ENCODE measurements at regions of chr14 and their contacts with region 1.

Region 1: GRCh38 chr14:24108336-24108874 is 6.2 kb upstream of the DCAF11 start:
- DNase-seq: no peak
- ATAC-seq: no peak
- H3K4me3 Mint-ChIP-seq: peak overlapping the region; percentile 7
- H3K27ac Mint-ChIP-seq: peak overlapping the region; percentile 94
- H3K4me1 Mint-ChIP-seq: peaks cover 24% of the 10 kb centered on the region
- H3K27me3 Mint-ChIP-seq: no peaks in the 10 kb centered on the region

Region 2: DNA sequence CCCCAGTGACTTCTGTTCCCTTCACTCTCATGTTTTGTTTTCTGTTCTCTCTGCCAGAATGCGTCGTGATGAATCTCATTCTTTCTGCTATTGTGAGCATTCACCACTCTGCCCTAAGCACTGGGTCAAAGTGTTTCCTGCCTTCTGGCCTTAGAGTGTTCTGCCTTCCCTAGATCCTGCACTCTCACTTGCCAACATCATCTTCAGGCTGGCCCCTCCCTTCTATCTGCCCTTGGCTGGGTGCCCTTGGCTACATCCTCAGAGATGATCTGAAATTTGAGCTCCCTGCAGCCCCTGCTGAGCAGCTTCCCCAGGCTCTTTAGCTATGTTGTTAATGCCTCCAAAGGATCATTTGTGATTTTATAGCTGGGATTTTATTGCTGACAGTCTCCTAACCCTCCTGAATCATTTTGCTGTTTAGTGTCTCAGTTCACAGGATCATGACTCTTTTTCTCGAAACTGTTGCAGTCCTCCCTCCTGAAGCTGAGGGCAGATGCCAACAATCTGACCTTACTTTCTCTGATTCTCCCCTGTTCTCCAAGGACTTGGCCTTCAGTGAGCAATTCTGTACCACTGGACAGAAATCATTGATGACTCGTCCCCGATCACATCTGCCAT is 467.8 kb before region 1 on chr14:
- CTCF ChIA-PET with region 1: no interaction called
- POLR2A ChIA-PET with region 1: no interaction called
- intact Hi-C with region 1: no loop called
- DNase-seq: no peak
- ATAC-seq: no peak
- H3K4me3 Mint-ChIP-seq: no peak overlapping the region
- H3K27ac Mint-ChIP-seq: no peak overlapping the region
- H3K4me1 Mint-ChIP-seq: no peaks in the 10 kb centered on the region
- H3K27me3 Mint-ChIP-seq: no peaks in the 10 kb centered on the region

Region 3: GRCh38 chr14:23827100-23827892 is 281.1 kb before region 1 on chr14:
- CTCF ChIA-PET with region 1: no interaction called
- POLR2A ChIA-PET with region 1: no interaction called
- intact Hi-C with region 1: no loop called
- DNase-seq: no peak
- ATAC-seq: no peak
- H3K4me3 Mint-ChIP-seq: no peak overlapping the region
- H3K27ac Mint-ChIP-seq: no peak overlapping the region
- H3K4me1 Mint-ChIP-seq: peaks cover 2% of the 10 kb centered on the region
- H3K27me3 Mint-ChIP-seq: peaks cover 3% of the 10 kb centered on the region

Region 4: GRCh38 chr14:24058260-24058950 is 50.0 kb before region 1 on chr14:
- CTCF ChIA-PET with region 1: interaction called, 71 read pairs
- POLR2A ChIA-PET with region 1: interaction called, 4 read pairs
- intact Hi-C with region 1: loop called (anchors 1 to 2 kb)
- DNase-seq: peak; percentile 73
- ATAC-seq: peak; percentile 63
- H3K4me3 Mint-ChIP-seq: no peak overlapping the region
- H3K27ac Mint-ChIP-seq: peak overlapping the region; percentile 40
- H3K4me1 Mint-ChIP-seq: peaks cover 4% of the 10 kb centered on the region
- H3K27me3 Mint-ChIP-seq: peaks cover 2% of the 10 kb centered on the region

Region 5: DNA sequence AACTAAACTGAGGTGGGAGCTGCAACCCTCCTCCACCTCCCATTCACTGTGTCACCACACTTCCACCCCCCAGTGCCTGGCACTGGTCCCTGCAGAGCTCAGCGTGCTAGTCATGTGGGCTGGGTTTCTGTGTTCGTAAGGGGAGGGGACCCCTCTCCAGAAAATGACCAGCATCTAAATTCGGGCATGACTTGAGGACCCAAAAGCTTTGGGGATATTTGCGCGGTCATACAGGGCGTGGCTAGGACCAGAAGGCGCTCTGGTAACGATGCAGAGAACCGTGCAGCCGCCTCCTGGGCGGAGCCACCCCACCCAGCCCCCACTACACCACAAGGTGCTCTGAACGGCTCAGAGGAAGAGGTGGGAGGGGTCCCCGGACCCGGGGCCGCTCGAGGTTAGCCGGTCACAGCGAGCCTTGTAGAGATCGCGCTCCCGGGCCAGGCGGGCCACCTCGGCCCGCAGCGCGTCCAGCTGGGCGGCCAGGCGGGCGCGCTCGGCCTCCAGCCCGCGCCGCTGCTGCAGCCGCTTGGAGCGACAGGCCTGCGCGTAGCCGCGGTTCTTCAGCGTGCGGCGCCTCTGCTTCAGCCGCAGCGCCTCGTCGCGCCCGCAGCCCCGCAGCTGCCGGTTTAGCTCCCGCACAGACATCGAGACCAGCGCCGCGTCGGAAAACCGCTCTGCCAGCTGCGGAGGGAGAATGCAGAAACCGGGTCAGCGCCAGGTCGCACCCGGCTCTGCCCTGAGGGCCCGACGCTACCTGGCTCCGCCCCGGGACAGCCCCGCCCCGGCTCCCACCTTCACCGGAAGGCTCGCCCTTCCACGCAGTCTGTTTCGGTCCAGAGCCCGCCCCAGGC is 27.3 kb before region 1 on chr14:
- CTCF ChIA-PET with region 1: interaction called, 14 read pairs
- POLR2A ChIA-PET with region 1: interaction called, 6 read pairs
- intact Hi-C with region 1: no loop called
- DNase-seq: peak; percentile 84
- ATAC-seq: peak; percentile 92
- H3K4me3 Mint-ChIP-seq: peak overlapping the region; percentile 68
- H3K27ac Mint-ChIP-seq: peak overlapping the region; percentile 45
- H3K4me1 Mint-ChIP-seq: peaks cover 20% of the 10 kb centered on the region
- H3K27me3 Mint-ChIP-seq: no peaks in the 10 kb centered on the region

Region 6: GRCh38 chr14:24135834-24136542 is 27.6 kb after region 1 on chr14 and contains the start of gene PSME1:
- CTCF ChIA-PET with region 1: interaction called, 12 read pairs
- POLR2A ChIA-PET with region 1: interaction called, 35 read pairs
- intact Hi-C with region 1: no loop called
- DNase-seq: peak; percentile 98
- ATAC-seq: peak; percentile 95
- H3K4me3 Mint-ChIP-seq: peak within 1 kb of the TSS; percentile 92
- H3K27ac Mint-ChIP-seq: peak within 1 kb of the TSS; percentile 92
- H3K4me1 Mint-ChIP-seq: peaks cover 50% of the 10 kb centered on the region
- H3K27me3 Mint-ChIP-seq: no peaks in the 10 kb centered on the region
- total RNA-seq, gene PSME1: 414 to 418 TPM

Region 7: DNA sequence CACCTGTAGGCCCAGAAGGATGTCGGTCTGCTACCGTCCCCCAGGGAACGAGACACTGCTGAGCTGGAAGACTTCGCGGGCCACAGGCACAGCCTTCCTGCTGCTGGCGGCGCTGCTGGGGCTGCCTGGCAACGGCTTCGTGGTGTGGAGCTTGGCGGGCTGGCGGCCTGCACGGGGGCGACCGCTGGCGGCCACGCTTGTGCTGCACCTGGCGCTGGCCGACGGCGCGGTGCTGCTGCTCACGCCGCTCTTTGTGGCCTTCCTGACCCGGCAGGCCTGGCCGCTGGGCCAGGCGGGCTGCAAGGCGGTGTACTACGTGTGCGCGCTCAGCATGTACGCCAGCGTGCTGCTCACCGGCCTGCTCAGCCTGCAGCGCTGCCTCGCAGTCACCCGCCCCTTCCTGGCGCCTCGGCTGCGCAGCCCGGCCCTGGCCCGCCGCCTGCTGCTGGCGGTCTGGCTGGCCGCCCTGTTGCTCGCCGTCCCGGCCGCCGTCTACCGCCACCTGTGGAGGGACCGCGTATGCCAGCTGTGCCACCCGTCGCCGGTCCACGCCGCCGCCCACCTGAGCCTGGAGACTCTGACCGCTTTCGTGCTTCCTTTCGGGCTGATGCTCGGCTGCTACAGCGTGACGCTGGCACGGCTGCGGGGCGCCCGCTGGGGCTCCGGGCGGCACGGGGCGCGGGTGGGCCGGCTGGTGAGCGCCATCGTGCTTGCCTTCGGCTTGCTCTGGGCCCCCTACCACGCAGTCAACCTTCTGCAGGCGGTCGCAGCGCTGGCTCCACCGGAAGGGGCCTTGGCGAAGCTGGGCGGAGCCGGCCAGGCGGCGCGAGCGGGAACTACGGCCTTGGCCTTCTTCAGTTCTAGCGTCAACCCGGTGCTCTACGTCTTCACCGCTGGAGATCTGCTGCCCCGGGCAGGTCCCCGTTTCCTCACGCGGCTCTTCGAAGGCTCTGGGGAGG is 202.5 kb after region 1 on chr14 and contains the start of gene LTB4R:
- CTCF ChIA-PET with region 1: interaction called, 17 read pairs
- POLR2A ChIA-PET with region 1: no interaction called
- intact Hi-C with region 1: no loop called
- DNase-seq: peak; percentile 81
- ATAC-seq: peak; percentile 83
- H3K4me3 Mint-ChIP-seq: peak within 1 kb of the TSS; percentile 70
- H3K27ac Mint-ChIP-seq: peak within 1 kb of the TSS; percentile 77
- H3K4me1 Mint-ChIP-seq: peaks cover 61% of the 10 kb centered on the region
- H3K27me3 Mint-ChIP-seq: no peaks in the 10 kb centered on the region
- total RNA-seq, gene LTB4R: 10.1 to 14.2 TPM